WTC11 (cell line): ENCODE measurements at regions of chr6 and their contacts with region 1.

Region 1: GRCh38 chr6:111478749-111479148 is 4.3 kb downstream of the REV3L start:
- DNase-seq: no peak
- ATAC-seq: peak; percentile 53
- H3K4me3 Mint-ChIP-seq: no peak overlapping the region
- H3K27ac Mint-ChIP-seq: no peak overlapping the region
- H3K4me1 Mint-ChIP-seq: peaks cover 37% of the 10 kb centered on the region
- H3K27me3 Mint-ChIP-seq: peaks cover 83% of the 10 kb centered on the region
- CTCF ChIP-seq: no peak

Region 2: GRCh38 chr6:111361648-111362047 is 117.1 kb before region 1 on chr6:
- CTCF ChIA-PET with region 1: interaction called, 20 read pairs
- POLR2A ChIA-PET with region 1: no interaction called
- DNase-seq: peak; percentile 49
- ATAC-seq: peak; percentile 78
- H3K4me3 Mint-ChIP-seq: no peak overlapping the region
- H3K27ac Mint-ChIP-seq: 0 out of 2 replicates have a peak overlapping the region, but pooled peaks have one; percentile 22
- H3K4me1 Mint-ChIP-seq: peaks cover 3% of the 10 kb centered on the region; the same call in 1 of the 2 replicates
- H3K27me3 Mint-ChIP-seq: no peaks in the 10 kb centered on the region
- CTCF ChIP-seq: no peak

Region 3: DNA sequence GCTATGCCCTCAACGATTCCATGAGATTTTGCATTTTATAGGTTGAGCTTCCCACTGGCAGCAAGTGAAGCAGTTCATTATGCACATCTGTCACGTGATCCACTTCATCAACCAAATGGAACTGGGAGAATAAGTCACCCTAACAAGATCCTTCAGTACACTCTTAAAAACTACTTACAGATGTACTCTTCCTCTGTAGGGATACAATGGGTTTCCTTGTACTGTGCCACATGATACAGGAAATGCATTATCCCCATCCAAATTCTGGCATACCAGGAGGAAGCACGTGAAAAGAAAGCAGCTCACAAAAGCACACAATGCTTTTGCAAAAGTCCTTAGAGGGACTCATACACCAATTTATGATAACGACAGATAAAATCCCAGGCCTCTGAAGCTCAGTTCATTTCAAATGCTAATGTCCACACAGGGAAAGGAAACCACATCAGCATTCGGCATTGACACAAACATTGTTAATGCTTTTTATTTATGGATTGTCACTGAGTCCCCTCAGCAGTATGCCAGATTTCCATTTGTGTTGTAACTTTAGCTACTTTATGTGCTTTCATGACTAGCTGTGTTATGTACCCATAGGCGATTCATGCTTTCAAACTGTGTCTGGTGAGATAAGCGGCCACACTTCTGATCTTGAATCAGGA is 62.4 kb after region 1 on chr6:
- CTCF ChIA-PET with region 1: no interaction called
- POLR2A ChIA-PET with region 1: no interaction called
- DNase-seq: no peak
- ATAC-seq: peak; percentile 29
- H3K4me3 Mint-ChIP-seq: no peak overlapping the region
- H3K27ac Mint-ChIP-seq: peak overlapping the region; percentile 52
- H3K4me1 Mint-ChIP-seq: peaks cover 44% of the 10 kb centered on the region
- H3K27me3 Mint-ChIP-seq: no peaks in the 10 kb centered on the region
- CTCF ChIP-seq: no peak

Region 4: GRCh38 chr6:111565326-111566221 is 86.8 kb after region 1 on chr6:
- CTCF ChIA-PET with region 1: interaction called, 17 read pairs
- POLR2A ChIA-PET with region 1: interaction called, 3 read pairs
- DNase-seq: peak; percentile 51
- ATAC-seq: peak; percentile 91
- H3K4me3 Mint-ChIP-seq: no peak overlapping the region
- H3K27ac Mint-ChIP-seq: peak overlapping the region; percentile 85
- H3K4me1 Mint-ChIP-seq: peaks cover 9% of the 10 kb centered on the region
- H3K27me3 Mint-ChIP-seq: no peaks in the 10 kb centered on the region
- CTCF ChIP-seq: peak; percentile 41; the same call in 1 of the 2 replicates

Region 5: DNA sequence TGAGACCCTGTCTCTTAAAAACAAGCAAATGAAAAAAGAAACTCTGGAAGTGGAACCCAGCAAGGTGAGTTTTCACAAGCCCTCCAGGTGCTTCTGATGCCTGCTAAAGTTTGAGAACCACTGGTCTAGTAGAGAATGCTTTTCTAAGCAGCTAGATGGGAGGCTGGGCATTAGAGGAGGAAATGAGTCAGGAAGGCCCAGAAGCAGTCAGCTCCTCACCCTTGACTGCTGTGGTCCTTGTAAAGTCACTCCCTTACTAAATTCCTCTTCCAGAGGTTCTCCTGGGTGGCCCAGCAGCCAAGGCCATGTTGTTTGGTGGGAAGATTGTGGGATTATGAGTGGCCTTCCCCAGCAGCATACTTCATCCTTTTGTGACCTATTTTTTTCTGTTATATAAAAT is 446.5 kb after region 1 on chr6:
- CTCF ChIA-PET with region 1: no interaction called
- POLR2A ChIA-PET with region 1: no interaction called
- DNase-seq: no peak
- ATAC-seq: no peak
- H3K4me3 Mint-ChIP-seq: no peak overlapping the region
- H3K27ac Mint-ChIP-seq: no peak overlapping the region
- H3K4me1 Mint-ChIP-seq: peaks cover 52% of the 10 kb centered on the region
- H3K27me3 Mint-ChIP-seq: peaks cover 6% of the 10 kb centered on the region
- CTCF ChIP-seq: no peak